Prostate gland (tissue), 2 donors: ENCODE measurements at regions of chr6 and their contacts with region 1.

Region 1: GRCh38 chr6:142146828-142147662 is at the starts of genes NMBR and VTA1:
- DNase-seq: peak; percentile 98
- H3K4me3 ChIP-seq: peak within 1 kb of the TSS; percentile 80 to 86
- H3K27ac ChIP-seq: peak within 1 kb of the TSS; percentile 41 to 64
- H3K4me1 ChIP-seq: peaks cover 4% of the 10 kb centered on the region
- H3K27me3 ChIP-seq: no peaks in the 10 kb centered on the region
- CTCF ChIP-seq: peak; percentile 78 to 97 (median 94)
- POLR2A ChIP-seq: no peak
- total RNA-seq, gene NMBR: not detected
- total RNA-seq, gene VTA1: 38.5 to 44.7 TPM

Region 2: DNA sequence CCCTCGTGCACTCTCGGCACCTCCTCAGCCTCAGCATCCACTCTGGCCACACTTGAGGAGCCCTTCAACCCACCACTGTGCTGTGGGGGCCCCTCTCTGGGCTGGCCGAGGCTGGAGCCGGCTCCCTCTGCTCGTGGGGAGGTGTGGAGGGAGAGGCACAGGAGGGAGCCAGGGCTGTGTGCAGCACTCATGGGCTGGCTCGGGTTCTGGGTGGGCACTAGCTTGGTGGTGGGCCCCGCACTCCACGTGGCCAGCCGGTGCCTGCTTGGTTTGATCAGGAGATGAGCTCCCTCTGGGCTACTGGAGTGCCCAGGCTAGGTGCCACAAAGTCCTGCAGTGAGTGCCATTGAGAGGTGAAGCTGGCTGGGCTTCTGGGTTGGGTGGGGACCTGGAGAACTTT is 963.7 kb before region 1 on chr6:
- intact Hi-C with region 1: no loop called
- DNase-seq: no peak
- H3K4me3 ChIP-seq: no peak overlapping the region
- H3K27ac ChIP-seq: no peak overlapping the region
- H3K4me1 ChIP-seq: no peaks in the 10 kb centered on the region
- H3K27me3 ChIP-seq: no peaks in the 10 kb centered on the region
- CTCF ChIP-seq: no peak
- POLR2A ChIP-seq: no peak

Region 3: DNA sequence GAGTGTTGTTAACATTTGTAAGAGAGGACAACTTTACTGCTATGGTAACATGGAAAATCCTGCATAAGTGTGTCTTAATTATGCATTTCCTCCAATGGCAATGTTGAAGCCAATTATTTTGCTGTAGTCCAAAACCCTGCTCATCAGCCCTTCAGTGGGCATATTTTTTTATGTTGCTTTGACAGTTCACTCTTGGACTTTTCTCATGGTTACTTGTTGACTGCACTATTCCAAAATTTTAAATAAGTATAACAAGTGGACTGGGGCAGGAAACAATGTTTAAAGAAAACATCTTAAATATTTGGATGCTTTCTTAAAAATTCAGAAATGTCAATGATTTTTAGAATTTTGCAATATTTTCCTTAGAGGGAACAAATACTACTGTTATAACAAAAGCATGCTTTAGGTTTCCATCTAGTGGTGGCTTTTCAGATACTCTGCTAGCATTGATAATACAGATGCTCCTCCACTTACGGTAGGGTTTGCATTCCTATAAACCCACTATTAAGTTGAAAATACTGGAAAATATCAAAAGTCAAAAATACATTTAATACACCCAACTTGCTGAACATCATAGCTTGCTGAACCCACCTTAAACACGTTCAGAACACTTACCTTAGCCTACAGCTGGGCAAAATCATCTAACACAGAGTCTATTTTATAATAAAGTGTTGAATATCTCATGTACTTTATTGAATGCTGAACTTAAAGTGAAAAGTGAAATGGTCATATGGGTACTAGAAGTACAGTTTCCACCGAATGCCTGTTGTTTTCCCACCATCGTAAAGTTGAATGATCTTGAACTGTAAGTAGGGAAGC is 241.2 kb after region 1 on chr6:
- intact Hi-C with region 1: loop called (anchors 5 kb)
- DNase-seq: no peak
- H3K4me3 ChIP-seq: no peak overlapping the region
- H3K27ac ChIP-seq: no peak overlapping the region
- H3K4me1 ChIP-seq: no peaks in the 10 kb centered on the region
- H3K27me3 ChIP-seq: no peaks in the 10 kb centered on the region
- CTCF ChIP-seq: peak in 3 of 4 experiments; percentile 44 to 64 (median 57)
- POLR2A ChIP-seq: no peak